Dorsolateral prefrontal cortex (tissue), 120 donors: ENCODE measurements at regions of chr2 and their contacts with region 1.

Region 1: DNA sequence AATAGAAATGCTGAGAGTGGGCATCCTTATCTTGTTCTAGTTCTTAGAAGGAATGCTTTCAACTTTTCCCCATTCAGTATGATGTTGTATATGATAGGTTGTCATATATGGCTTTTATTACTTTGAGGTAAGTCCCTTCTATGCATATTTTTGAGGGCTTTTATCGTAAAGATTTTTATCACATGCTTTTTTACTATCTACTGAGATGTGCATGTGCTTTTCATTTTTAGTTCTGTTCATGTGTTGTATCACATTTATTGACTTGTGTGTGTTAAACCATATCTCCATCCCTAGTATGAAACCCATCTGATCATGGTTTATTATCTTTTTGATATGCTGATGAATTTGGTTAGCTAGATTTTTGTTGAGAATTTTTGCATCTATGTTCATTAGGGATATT is 1008.8 kb downstream of the CNTNAP5 start:
- DNase-seq: no peak
- H3K4me3 ChIP-seq: no peak overlapping the region
- H3K27ac ChIP-seq: no peak overlapping the region
- H3K27me3 ChIP-seq: no peaks in the 10 kb centered on the region
- CTCF ChIP-seq: no peak

Region 2: DNA sequence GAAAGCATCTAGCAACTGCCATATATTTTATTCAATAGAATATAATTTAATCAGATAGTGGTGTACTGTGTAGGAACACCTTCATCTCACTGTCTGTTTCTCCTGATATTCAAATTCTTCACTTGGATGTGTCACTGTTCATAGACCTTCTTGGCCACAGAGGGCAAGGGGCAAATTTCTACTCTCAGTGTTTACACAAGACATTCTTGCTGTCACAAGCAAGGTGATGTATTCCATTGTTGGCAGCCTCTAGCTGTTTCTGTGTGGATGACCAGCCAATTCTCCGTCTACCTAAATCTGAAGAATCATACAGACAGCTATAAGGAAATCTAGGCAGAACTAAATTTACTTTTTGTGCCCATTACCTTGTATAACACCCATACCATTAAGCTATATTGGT is 60.5 kb before region 1 on chr2:
- intact Hi-C with region 1: loop called in 1 of 2 experiments (anchors 5 kb)
- DNase-seq: no peak
- H3K4me3 ChIP-seq: no peak overlapping the region
- H3K27ac ChIP-seq: no peak overlapping the region
- H3K27me3 ChIP-seq: no peaks in the 10 kb centered on the region
- CTCF ChIP-seq: no peak